ENCODE measurements at regions of chr2 and their contacts with region 1.

Region 1: DNA sequence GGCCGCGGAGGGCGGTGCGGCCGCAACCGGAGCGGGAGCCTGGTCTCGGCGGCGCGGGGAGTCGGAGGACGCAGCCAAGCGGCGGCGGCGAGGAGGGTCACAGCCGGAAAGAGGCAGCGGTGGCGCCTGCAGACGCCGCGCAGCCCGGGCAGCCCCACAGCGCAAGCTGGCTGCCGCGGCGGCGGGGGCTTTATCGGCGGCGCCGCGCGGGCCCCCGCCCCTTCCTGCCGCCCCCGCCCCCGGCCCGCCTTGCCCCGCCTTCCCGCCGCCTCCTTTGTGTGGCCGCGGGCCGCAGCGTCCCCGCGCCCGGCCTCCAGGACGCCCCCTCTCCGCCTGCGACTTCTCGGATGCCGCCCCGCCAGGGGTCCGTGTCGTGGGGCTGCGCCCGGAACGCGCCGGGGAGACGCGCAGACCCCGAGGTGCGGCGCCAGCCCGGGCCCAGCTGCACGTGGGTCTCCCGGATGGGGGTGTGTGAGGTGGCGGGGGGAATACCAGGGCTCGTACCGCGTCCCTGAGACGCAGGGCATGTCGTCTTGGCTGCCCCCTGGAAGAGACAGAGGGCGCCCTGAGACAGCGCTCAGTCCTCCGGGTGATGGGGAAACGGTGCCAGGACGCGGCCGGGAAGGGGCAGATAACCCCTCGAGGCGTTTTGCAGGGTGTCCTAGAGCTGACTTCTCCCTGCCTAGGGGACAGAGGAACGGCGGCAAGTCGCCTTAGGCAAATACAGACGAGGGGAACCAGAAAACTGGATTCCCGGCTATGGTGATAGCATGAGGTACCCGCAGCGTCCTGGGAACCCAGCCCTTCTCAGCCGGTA is at the start of gene SERPINE2:
- DNase-seq: peak; percentile 63
- H3K4me3 ChIP-seq: peak within 1 kb of the TSS; percentile 80 to 92 (median 81)
- H3K27ac ChIP-seq: peak within 1 kb of the TSS; percentile 24
- H3K4me1 ChIP-seq: peaks cover 25% of the 10 kb centered on the region
- H3K27me3 ChIP-seq: no peaks in the 10 kb centered on the region
- CTCF ChIP-seq: peak in 1 of 2 donors; percentile 59
- total RNA-seq, gene SERPINE2: 490 to 535 TPM

Region 2: GRCh38 chr2:223970343-223971128 is 68.8 kb before region 1 on chr2:
- CTCF ChIA-PET with region 1: no interaction called
- dilution Hi-C with region 1: no loop called
- in situ Hi-C with region 1: no loop called
- intact Hi-C with region 1: loop called (anchors 1 kb)
- DNase-seq: peak; percentile 50
- H3K4me3 ChIP-seq: no peak overlapping the region
- H3K27ac ChIP-seq: no peak overlapping the region
- H3K4me1 ChIP-seq: no peaks in the 10 kb centered on the region
- H3K27me3 ChIP-seq: no peaks in the 10 kb centered on the region
- CTCF ChIP-seq: peak; percentile 88 to 96

Region 3: DNA sequence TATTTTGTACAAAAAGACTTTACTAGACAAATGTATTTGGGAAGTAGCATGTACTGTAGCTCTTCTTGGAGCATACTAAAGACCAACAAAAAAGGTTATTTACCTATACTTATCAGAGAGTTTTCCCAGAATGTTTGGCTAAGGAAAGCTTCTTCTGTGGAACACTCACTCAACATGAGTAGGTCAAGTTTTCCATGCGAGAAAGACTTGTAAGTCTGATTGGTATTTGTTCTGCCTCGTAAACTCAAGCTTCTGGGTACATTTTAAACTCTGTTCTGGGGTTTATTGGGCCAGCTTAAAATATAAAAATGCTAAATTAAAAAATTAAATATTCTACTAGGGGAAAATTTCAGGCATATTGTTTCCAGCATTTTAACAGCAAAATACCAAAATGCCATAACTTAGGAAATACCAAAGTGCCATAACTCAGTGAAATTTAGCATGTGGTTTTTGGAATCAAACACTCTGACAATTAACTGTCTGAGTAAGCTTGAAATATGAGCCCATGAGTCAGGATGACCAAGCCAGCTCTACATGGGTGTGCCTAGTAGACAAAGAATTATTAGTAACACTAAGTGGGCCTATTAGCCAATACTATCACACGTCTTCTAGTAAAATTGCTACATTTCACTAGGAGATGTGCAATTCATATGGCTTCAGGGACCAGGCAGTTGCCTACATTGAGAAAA is 47.0 kb after region 1 on chr2:
- CTCF ChIA-PET with region 1: no interaction called
- dilution Hi-C with region 1: no loop called
- in situ Hi-C with region 1: no loop called
- intact Hi-C with region 1: loop called (anchors 2 kb)
- DNase-seq: peak; percentile 97
- H3K4me3 ChIP-seq: no peak overlapping the region
- H3K27ac ChIP-seq: peak overlapping the region; percentile 93
- H3K4me1 ChIP-seq: peaks cover 31% of the 10 kb centered on the region
- H3K27me3 ChIP-seq: no peaks in the 10 kb centered on the region
- CTCF ChIP-seq: no peak

Region 4: GRCh38 chr2:224145751-224146355 is 106.5 kb after region 1 on chr2:
- CTCF ChIA-PET with region 1: interaction called, 6 read pairs
- dilution Hi-C with region 1: no loop called
- in situ Hi-C with region 1: no loop called
- intact Hi-C with region 1: loop called (anchors 1 kb)
- DNase-seq: peak; percentile 84
- H3K4me3 ChIP-seq: no peak overlapping the region
- H3K27ac ChIP-seq: peak overlapping the region; percentile 64
- H3K4me1 ChIP-seq: peaks cover 46% of the 10 kb centered on the region
- H3K27me3 ChIP-seq: no peaks in the 10 kb centered on the region
- CTCF ChIP-seq: no peak

Region 5: GRCh38 chr2:224278531-224278930 is 239.2 kb after region 1 on chr2:
- CTCF ChIA-PET with region 1: no interaction called
- dilution Hi-C with region 1: no loop called
- in situ Hi-C with region 1: no loop called
- intact Hi-C with region 1: loop called (anchors 1 kb)
- DNase-seq: peak; percentile 78
- H3K4me3 ChIP-seq: no peak overlapping the region
- H3K27ac ChIP-seq: no peak overlapping the region
- H3K4me1 ChIP-seq: no peaks in the 10 kb centered on the region
- H3K27me3 ChIP-seq: no peaks in the 10 kb centered on the region
- CTCF ChIP-seq: peak in 1 of 2 donors; percentile 33

Measured in mammary epithelial cell (primary cell).